Activated CD8-positive, alpha-beta T cell treated with anti-CD3 and anti-CD28 coated beads, Interleukin-2, amount 10 ng/mL, durations not matched to agents 7 days and 5 days (primary cell): ENCODE measurements at regions of chr1 and their contacts with region 1.

Region 1: GRCh38 chr1:207868774-207869721 is 41.9 kb downstream of the CD34 start:
- DNase-seq: peak; percentile 70
- ATAC-seq: peak; percentile 69
- H3K4me3 Mint-ChIP-seq: peak overlapping the region; percentile 93
- H3K27ac Mint-ChIP-seq: peak overlapping the region; percentile 86
- H3K4me1 Mint-ChIP-seq: peaks cover 77% of the 10 kb centered on the region
- H3K27me3 Mint-ChIP-seq: no peaks in the 10 kb centered on the region

Region 2: DNA sequence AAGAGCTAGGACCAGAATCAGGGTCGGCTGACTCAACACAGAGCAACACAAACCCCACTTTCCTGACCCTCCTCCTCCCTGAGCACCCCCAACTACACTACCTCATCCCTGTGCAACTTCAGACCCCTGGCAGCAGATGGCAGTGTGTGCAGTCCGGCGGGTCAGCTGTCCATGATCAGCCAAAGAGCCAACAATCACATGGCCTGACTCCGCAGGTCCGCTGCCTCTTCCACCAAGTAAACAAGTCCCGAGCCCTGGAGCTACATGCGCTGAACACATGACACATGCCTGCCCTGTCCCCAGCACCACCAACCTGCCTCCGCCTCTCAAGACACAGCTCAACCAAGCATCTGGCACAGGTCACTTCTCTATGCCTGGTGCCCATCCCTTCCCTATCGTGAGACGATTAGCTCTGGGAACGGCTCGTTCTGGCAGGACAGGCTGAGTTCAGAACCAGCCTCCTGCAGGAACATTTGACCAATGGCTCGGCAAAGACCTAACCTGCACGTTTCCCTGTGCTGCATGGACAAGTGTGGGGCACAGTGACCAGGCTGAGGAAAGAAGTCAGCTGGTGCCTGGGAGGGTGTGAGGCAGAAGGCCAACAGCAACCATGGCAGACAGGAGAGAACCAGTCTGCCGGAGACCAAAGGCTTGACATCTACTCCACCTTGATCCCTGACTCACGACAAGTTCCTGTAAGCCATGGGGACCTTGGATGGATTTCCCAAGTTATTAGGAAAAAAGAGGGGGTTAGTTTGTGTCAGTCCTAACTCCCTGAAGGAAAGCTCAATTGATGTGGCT is 56.9 kb before region 1 on chr1:
- CTCF ChIA-PET with region 1: interaction called, 10 read pairs
- POLR2A ChIA-PET with region 1: no interaction called
- DNase-seq: no peak
- ATAC-seq: no peak
- H3K4me3 Mint-ChIP-seq: no peak overlapping the region
- H3K27ac Mint-ChIP-seq: no peak overlapping the region
- H3K4me1 Mint-ChIP-seq: peaks cover 37% of the 10 kb centered on the region
- H3K27me3 Mint-ChIP-seq: no peaks in the 10 kb centered on the region

Region 3: GRCh38 chr1:207828485-207829158 is 40.4 kb before region 1 on chr1:
- CTCF ChIA-PET with region 1: interaction called, 656 read pairs
- POLR2A ChIA-PET with region 1: interaction called, 26 read pairs
- DNase-seq: peak; percentile 64
- ATAC-seq: no peak
- H3K4me3 Mint-ChIP-seq: no peak overlapping the region
- H3K27ac Mint-ChIP-seq: no peak overlapping the region
- H3K4me1 Mint-ChIP-seq: peaks cover 86% of the 10 kb centered on the region
- H3K27me3 Mint-ChIP-seq: no peaks in the 10 kb centered on the region

Region 4: DNA sequence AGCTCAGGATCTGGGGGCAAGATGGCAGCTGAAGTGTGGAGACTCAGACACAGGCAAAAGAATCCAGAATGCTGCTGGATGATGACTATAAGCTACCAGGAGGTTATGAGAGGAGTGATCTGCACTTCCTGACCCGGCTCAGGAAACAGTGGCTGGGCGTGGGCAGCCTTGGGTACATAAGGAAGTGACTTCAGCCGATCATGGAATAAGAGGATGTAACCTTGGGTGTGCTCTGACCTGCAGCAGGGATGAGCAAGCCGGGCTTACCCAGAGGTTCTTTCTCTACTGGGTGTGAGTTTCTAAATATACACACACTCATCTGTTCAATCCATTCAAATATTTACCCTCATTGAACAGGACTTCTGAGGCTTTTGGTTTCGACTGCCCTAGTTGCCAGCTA is 20.8 kb before region 1 on chr1:
- CTCF ChIA-PET with region 1: interaction called, 656 read pairs
- POLR2A ChIA-PET with region 1: no interaction called
- DNase-seq: no peak
- ATAC-seq: peak; percentile 70
- H3K4me3 Mint-ChIP-seq: peak overlapping the region; percentile 39
- H3K27ac Mint-ChIP-seq: peak overlapping the region; percentile 80
- H3K4me1 Mint-ChIP-seq: peaks cover 43% of the 10 kb centered on the region
- H3K27me3 Mint-ChIP-seq: no peaks in the 10 kb centered on the region

Region 5: DNA sequence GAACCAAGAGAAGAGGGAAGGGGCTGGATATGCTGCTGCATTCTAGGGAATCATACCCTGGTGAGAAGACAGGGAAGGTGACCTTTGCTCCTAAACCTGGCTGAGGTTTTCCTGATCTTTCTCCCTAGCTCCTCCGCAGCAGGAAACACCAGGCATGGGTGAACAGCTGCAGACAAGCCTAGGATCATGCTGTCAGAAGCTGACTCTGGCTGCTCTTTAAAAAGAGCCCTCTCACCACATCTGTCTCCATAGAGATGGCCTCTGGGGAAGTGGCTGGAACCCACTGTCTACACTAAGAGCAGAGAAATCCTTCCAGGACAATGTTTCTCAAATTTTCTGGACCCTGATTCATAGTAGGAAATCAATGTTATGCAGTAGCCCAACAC is 15.7 kb before region 1 on chr1:
- CTCF ChIA-PET with region 1: interaction called, 48 read pairs
- POLR2A ChIA-PET with region 1: interaction called, 4 read pairs
- DNase-seq: no peak
- ATAC-seq: no peak
- H3K4me3 Mint-ChIP-seq: no peak overlapping the region
- H3K27ac Mint-ChIP-seq: no peak overlapping the region
- H3K4me1 Mint-ChIP-seq: peaks cover 58% of the 10 kb centered on the region
- H3K27me3 Mint-ChIP-seq: no peaks in the 10 kb centered on the region

Region 6: DNA sequence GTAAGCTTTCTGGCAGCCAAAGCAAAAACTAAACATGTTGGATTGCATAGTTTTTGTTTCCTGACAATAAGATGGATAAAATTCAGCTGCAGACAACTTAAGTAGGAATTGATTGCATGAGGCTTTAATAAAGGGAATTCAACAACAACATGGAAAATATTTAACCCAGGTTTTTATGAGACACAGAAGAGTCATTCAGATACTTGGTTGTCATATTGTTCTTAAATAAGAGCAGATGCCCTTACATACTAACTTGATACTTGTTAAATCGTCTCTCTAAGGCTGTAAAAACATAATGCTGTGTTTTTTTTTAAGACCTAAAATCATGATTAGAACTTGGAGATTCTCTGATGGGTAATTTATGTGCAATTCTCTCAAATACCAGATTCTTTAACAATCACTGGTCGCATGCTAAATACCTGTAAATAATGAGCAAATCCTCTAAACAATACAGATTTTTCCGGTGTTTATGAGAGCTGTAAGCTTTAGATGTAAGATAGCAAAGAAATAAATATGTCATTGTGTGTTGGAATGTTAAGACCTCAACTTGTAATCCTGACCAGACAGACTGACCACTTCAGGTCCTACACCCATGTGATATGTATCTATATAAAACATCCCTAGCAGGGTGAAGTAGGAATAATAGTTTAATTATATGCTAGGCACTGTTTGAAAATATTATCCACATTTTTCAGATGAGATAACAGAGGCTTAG is 79.6 kb after region 1 on chr1:
- CTCF ChIA-PET with region 1: no interaction called
- POLR2A ChIA-PET with region 1: no interaction called
- DNase-seq: no peak
- ATAC-seq: no peak
- H3K4me3 Mint-ChIP-seq: no peak overlapping the region
- H3K27ac Mint-ChIP-seq: no peak overlapping the region
- H3K4me1 Mint-ChIP-seq: no peaks in the 10 kb centered on the region
- H3K27me3 Mint-ChIP-seq: peaks cover 9% of the 10 kb centered on the region